Heart left ventricle (tissue), 16 donors: ENCODE measurements at regions of chr22 and their contacts with region 1.

Region 1: DNA sequence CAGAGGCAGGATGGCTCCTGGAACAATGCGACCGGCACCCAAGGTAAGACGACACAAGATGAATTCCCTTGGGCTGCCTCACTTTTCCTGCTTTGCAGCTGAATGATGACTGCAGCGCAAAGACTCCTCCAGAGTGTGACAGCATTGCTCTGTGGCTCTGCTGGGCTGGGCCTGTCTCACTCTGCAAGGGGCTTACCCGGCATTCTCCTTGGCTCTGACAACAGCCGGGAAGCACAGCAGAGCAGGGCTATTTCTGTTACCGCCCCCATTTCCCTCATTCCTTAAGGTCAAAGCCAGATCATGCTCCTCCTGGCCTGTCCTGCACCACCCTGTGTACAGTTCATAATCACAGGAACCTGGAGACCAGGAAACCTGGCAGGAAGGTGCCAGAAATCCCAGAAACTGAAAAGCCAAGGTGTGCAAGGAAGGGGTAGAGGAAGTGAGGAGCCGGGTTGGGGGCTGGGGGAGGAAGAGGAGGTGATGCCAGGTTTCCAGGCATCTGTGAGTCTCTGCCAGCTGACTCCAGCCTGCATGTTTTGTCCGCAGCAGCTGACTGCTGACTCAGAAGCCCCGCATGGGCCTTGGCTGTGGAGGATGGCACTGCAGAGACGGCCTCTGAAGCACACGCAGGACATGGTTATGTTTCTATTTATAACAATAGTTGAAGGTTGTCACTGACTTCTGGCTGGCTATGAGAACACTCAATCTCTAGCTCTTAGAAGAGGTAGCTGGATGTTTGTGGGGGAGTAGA is 113.6 kb downstream of the MICAL3 start:
- DNase-seq: peak; percentile 79 to 92 (median 84)
- ATAC-seq: peak; percentile 88 to 94 (median 90)
- H3K4me3 ChIP-seq: peak overlapping the region in 5 of 12 donors; percentile 1 to 24 (median 14)
- H3K27ac ChIP-seq: peak overlapping the region; percentile 82 to 96 (median 88)
- H3K4me1 ChIP-seq: peaks cover 4 to 95% (median 54%) of the 10 kb centered on the region in 12 donors
- H3K27me3 ChIP-seq: no peaks in the 10 kb centered on the region
- CTCF ChIP-seq: peak; percentile 14 to 78 (median 54)
- POLR2A ChIP-seq: peak in 1 of 2 donors; percentile 13

Region 2: DNA sequence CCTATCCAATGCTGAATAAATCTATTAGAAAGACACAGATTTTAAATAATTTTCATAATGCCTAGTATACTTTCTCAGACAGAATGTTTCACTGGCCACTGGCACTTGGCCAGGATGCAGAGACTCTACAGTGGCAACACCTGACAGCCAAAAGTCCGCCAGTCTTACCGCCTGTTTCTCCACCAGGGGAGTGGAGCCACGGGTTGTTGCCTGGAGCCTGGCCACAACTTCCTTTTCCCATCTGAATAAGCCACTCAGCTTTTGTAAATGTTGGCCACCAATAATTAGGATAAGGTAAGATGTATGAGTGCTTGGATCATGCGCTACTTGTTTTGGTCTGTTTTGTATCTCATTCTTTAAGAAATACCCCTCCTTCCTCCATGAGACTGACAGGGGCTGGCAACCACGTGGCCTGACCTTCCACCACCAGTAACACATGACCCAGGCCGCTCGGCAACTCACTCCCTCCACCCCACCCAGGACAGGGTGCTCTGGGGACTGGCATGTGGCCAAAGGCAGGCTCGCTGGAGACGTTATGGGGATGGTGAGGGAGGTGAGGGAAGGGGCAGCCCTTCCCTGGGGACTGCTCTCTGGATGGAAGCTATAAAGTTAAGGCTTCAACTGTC is 43.5 kb before region 1 on chr22:
- intact Hi-C with region 1: no loop called
- DNase-seq: peak; percentile 74 to 87 (median 82)
- ATAC-seq: peak; percentile 72 to 81 (median 78)
- H3K4me3 ChIP-seq: no peak overlapping the region
- H3K27ac ChIP-seq: peak overlapping the region in 10 of 12 donors; percentile 11 to 74 (median 46)
- H3K4me1 ChIP-seq: peaks cover 0 to 45% (median 11%) of the 10 kb centered on the region in 12 donors
- H3K27me3 ChIP-seq: no peaks in the 10 kb centered on the region
- CTCF ChIP-seq: peak in 1 of 12 donors; percentile 7
- POLR2A ChIP-seq: no peak

Region 3: DNA sequence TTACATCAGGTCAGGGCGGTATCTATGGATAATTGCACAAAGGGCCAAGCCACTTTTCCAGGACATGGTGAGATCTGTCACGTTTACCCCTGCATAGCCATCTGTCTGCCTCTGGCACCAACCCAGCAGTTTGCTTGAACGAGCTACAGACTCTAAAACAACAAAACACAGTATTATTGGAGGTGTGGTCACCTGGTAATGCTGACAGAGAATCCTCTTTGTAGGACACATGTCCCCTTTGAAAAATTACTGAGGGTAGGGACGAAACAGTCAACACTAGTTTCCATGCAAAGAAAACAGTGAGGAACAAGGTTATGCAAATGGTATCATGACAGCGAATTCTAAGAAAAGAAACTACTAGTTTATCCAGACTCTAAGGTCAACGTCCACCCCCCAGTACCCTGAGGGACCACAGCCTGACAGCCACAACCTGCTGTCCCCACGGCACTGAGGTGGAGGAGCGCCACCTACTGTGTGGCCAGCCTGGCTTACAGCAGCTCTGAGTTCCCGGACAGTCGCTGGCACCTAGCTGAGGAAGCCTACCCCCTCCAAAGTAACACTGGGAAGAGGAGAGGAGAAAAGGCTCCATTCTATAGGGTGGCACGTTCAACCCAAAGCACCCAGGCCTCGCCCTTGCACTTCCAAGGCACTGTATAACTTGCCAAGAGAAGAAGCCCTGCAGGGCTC is 19.1 kb before region 1 on chr22:
- intact Hi-C with region 1: no loop called
- DNase-seq: peak in 4 of 5 donors; percentile 61 to 82 (median 68)
- ATAC-seq: peak; percentile 62 to 82 (median 72)
- H3K4me3 ChIP-seq: no peak overlapping the region
- H3K27ac ChIP-seq: peak overlapping the region; percentile 7 to 91 (median 80)
- H3K4me1 ChIP-seq: peaks cover 0 to 49% (median 18%) of the 10 kb centered on the region in 12 donors
- H3K27me3 ChIP-seq: no peaks in the 10 kb centered on the region
- CTCF ChIP-seq: peak; percentile 31 to 72 (median 58)
- POLR2A ChIP-seq: no peak

Region 4: DNA sequence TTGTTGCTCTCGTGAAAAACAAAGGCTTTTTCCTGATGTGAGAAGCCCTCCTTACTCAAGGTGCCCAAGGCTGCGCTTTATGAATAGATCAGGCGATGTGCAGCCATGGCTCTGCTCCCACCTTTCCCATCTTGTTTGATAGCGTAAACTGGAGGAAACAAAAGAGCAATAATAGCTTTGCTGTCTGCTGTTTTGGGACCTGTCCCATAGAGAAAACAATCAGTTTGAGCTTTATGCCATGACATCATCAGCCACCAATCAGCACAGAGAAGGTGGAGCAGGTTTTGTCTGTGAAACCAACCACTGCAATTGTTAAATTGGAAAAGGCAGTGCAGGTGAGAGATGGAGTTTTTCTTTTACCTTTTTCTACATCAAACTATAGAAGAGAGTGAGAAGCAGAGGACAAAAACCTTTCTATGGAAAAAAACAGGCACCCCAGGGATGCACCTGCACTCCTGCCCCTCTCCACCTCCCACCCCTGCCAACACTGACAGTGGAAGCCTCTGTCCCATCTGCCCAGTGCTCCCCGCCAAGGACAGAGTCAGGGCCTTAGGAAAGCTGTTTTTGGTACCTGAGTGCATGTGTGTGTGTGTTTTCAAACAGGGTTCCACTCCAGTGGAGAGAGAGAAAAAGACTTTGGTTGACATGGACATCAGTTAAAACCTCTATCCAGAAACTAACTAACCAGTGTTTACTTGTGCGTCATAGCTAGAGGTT is 33.0 kb after region 1 on chr22:
- intact Hi-C with region 1: loop called in 2 of 10 experiments (anchors 2 to 5 kb)
- DNase-seq: no peak
- ATAC-seq: peak in 1 of 4 donors; percentile 19
- H3K4me3 ChIP-seq: no peak overlapping the region
- H3K27ac ChIP-seq: peak overlapping the region in 11 of 12 donors; percentile 15 to 93 (median 82)
- H3K4me1 ChIP-seq: peaks cover 9 to 97% (median 73%) of the 10 kb centered on the region in 12 donors
- H3K27me3 ChIP-seq: no peaks in the 10 kb centered on the region
- CTCF ChIP-seq: no peak
- POLR2A ChIP-seq: no peak

Region 5: GRCh38 chr22:17950651-17951214 is 40.0 kb after region 1 on chr22:
- intact Hi-C with region 1: loop called in 3 of 10 experiments (anchors 2 to 5 kb)
- DNase-seq: peak in 4 of 5 donors; percentile 61 to 85 (median 68)
- ATAC-seq: peak; percentile 72 to 78 (median 74)
- H3K4me3 ChIP-seq: no peak overlapping the region
- H3K27ac ChIP-seq: peak overlapping the region; percentile 59 to 95 (median 79)
- H3K4me1 ChIP-seq: peaks cover 2 to 90% (median 46%) of the 10 kb centered on the region in 12 donors
- H3K27me3 ChIP-seq: no peaks in the 10 kb centered on the region
- CTCF ChIP-seq: no peak
- POLR2A ChIP-seq: no peak

Region 6: GRCh38 chr22:17960695-17961445 is 50.1 kb after region 1 on chr22:
- intact Hi-C with region 1: no loop called
- DNase-seq: no peak
- ATAC-seq: peak in 1 of 4 donors; percentile 21
- H3K4me3 ChIP-seq: no peak overlapping the region
- H3K27ac ChIP-seq: peak overlapping the region in 1 of 12 donors; percentile 22
- H3K4me1 ChIP-seq: peaks cover 4 to 64% (median 27%) of the 10 kb centered on the region in 12 donors
- H3K27me3 ChIP-seq: no peaks in the 10 kb centered on the region
- CTCF ChIP-seq: no peak
- POLR2A ChIP-seq: no peak

Region 7: GRCh38 chr22:17972385-17973181 is 61.8 kb after region 1 on chr22:
- intact Hi-C with region 1: loop called in 2 of 10 experiments (anchors 2 to 5 kb)
- DNase-seq: peak in 1 of 5 donors; percentile 42
- ATAC-seq: peak in 3 of 4 donors; percentile 28 to 33 (median 33)
- H3K4me3 ChIP-seq: no peak overlapping the region
- H3K27ac ChIP-seq: peak overlapping the region in 9 of 12 donors; percentile 23 to 66 (median 51)
- H3K4me1 ChIP-seq: peaks cover 0 to 74% (median 46%) of the 10 kb centered on the region in 12 donors
- H3K27me3 ChIP-seq: no peaks in the 10 kb centered on the region
- CTCF ChIP-seq: no peak
- POLR2A ChIP-seq: no peak

Region 8: DNA sequence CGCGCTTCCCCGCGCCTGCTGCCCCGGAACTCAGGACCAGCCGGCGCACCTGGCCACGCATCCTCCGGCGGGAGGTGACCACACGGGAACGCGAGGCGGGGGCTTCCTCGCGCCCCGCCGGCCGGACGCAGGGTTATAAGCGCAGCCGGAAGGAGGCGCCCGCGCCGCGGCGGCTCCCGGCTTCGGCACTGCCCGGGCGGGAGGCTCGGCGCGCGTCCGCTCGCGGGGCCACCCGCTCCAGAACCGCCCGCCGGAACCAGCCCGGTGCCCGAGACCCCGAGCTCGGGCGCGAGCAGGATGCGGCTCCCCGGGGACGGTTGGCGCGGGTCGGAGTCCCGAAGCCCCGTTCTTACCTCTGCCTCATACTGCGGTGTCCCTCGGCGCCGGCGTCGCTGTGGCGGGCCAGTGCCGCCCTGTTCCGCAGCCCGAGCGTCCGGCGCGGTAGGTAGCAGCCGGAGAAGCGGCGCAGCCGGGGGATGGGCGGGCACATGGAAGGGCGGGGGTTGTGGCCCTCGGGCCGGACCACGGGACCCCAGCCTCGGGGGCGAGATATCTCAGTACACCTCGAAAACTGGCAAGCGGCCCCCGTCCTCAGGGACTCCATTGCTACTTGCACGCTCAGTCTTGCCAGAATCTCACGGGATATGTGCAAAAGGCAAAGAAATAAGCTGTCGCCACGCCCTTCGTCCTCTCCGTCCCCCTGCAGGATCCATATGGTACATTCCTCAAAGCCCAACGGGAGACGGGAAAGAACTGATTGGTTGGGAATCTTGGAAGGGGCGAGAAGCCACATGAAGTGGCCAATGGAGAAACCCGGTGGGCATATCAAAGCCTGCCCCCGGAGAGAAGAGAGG is 90.5 kb after region 1 on chr22:
- intact Hi-C with region 1: loop called in 8 of 10 experiments (anchors 2 to 10 kb)
- DNase-seq: peak; percentile 91 to 94 (median 92)
- ATAC-seq: peak; percentile 96 to 98 (median 97)
- H3K4me3 ChIP-seq: peak overlapping the region; percentile 65 to 99 (median 84)
- H3K27ac ChIP-seq: peak overlapping the region; percentile 86 to 98 (median 95)
- H3K4me1 ChIP-seq: peaks cover 0 to 37% (median 18%) of the 10 kb centered on the region in 12 donors
- H3K27me3 ChIP-seq: peaks cover 0 to 3% (median 0%) of the 10 kb centered on the region in 9 donors
- CTCF ChIP-seq: peak in 11 of 12 donors; percentile 19 to 67 (median 49)
- POLR2A ChIP-seq: peak in 1 of 2 donors; percentile 86

Region 9: GRCh38 chr22:18024276-18024947 is 113.7 kb after region 1 on chr22 and contains the start of gene MICAL3:
- intact Hi-C with region 1: loop called in 8 of 10 experiments (anchors 1 to 5 kb)
- DNase-seq: peak; percentile 54 to 78 (median 68)
- ATAC-seq: peak in 3 of 4 donors; percentile 66 to 91 (median 87)
- H3K4me3 ChIP-seq: peak within 1 kb of the TSS; percentile 56 to 92 (median 72)
- H3K27ac ChIP-seq: peak within 1 kb of the TSS; percentile 22 to 91 (median 86)
- H3K4me1 ChIP-seq: peaks cover 0 to 35% (median 11%) of the 10 kb centered on the region in 12 donors
- H3K27me3 ChIP-seq: peaks cover 0 to 32% (median 0%) of the 10 kb centered on the region in 9 donors
- CTCF ChIP-seq: peak; percentile 27 to 80 (median 64)
- POLR2A ChIP-seq: peak in 1 of 2 donors; percentile 19
- total RNA-seq, gene MICAL3: 41.3 to 125 (median 101) TPM

Region 10: GRCh38 chr22:18035740-18036139 is 125.0 kb after region 1 on chr22:
- intact Hi-C with region 1: no loop called
- DNase-seq: peak in 3 of 5 donors; percentile 20 to 80 (median 48)
- ATAC-seq: peak in 3 of 4 donors; percentile 44 to 67 (median 47)
- H3K4me3 ChIP-seq: no peak overlapping the region
- H3K27ac ChIP-seq: no peak overlapping the region
- H3K4me1 ChIP-seq: peaks cover 0 to 40% (median 16%) of the 10 kb centered on the region in 12 donors
- H3K27me3 ChIP-seq: no peaks in the 10 kb centered on the region
- CTCF ChIP-seq: no peak
- POLR2A ChIP-seq: no peak